ENCODE measurements at regions of chr12 and their contacts with region 1.

Region 1: DNA sequence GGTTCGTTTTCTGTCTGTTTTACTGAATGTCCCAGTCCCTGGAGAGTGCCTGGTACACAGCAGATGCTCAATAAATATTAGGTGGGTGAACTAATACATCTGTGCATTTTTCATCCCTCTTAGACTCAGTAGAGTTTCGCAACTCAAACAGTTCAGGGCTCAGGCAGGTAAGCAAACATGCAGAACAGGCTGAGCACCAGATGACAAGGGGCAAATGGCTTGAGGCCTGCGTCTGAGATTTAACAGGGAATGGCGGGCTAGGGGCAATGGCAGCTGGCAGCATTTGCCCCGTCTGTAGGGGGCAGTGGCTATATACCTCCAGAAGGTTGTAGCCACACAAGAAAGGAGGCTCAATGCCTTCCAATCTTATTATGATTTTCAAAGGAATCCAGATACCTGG is 8.6 kb upstream of the RAN start:
- DNase-seq: no peak
- H3K4me3 ChIP-seq: no peak overlapping the region
- H3K27ac ChIP-seq: no peak overlapping the region
- H3K4me1 ChIP-seq: no peaks in the 10 kb centered on the region
- CTCF ChIP-seq: peak; percentile 44

Region 2: DNA sequence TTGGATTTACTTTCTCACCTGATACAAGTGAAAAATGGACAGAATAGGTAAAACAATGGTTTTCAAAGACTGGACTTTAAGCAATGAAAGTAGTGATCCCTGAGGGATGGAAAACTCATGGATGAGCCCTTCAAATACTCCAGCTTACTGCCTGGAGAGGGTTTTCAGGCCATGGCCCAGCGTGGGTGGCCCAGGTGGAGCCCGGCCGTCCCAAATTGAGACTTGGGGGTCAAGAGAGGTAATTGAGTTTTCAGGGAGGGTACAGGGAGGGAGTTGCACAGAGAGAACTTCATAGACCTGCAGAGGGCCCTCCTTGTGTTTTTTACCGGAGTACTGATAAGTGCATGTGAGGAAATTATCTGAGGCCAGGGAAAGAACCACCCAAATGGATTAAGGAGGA is 45.8 kb after region 1 on chr12:
- CTCF ChIA-PET with region 1: no interaction called
- POLR2A ChIA-PET with region 1: no interaction called
- intact Hi-C with region 1: loop called (anchors 1 kb)
- DNase-seq: no peak
- H3K4me3 ChIP-seq: no peak overlapping the region
- H3K27ac ChIP-seq: no peak overlapping the region
- H3K4me1 ChIP-seq: no peaks in the 10 kb centered on the region
- CTCF ChIP-seq: no peak

Measured in OCI-LY7 (cell line).